Esophagus muscularis mucosa (tissue), 4 donors: ENCODE measurements at regions of chr11 and their contacts with region 1.

Region 1: GRCh38 chr11:47847892-47848635 is at the start of gene NUP160:
- DNase-seq: peak; percentile 95
- H3K4me3 ChIP-seq: peak within 1 kb of the TSS; percentile 82 to 90 (median 86)
- H3K27ac ChIP-seq: peak within 1 kb of the TSS; percentile 88 to 94 (median 90)
- H3K4me1 ChIP-seq: peaks cover 25 to 46% (median 34%) of the 10 kb centered on the region in 4 donors
- H3K27me3 ChIP-seq: no peaks in the 10 kb centered on the region
- CTCF ChIP-seq: peak in 1 of 3 experiments; percentile 6
- EP300 ChIP-seq: no peak
- POLR2A ChIP-seq: peak; percentile 38
- total RNA-seq, gene NUP160: 18.4 to 22.7 (median 19.0) TPM

Region 2: GRCh38 chr11:47642099-47642855 is 205.8 kb before region 1 on chr11 and contains the start of gene MTCH2:
- intact Hi-C with region 1: loop called (anchors 5 kb)
- DNase-seq: peak; percentile 99
- H3K4me3 ChIP-seq: peak within 1 kb of the TSS; percentile 72 to 92 (median 88)
- H3K27ac ChIP-seq: peak within 1 kb of the TSS; percentile 92 to 99 (median 95)
- H3K4me1 ChIP-seq: peaks cover 14 to 31% (median 28%) of the 10 kb centered on the region in 4 donors
- H3K27me3 ChIP-seq: no peaks in the 10 kb centered on the region
- CTCF ChIP-seq: peak; percentile 39 to 47 (median 40)
- EP300 ChIP-seq: no peak
- POLR2A ChIP-seq: peak; percentile 47
- total RNA-seq, gene MTCH2: 32.5 to 40.6 (median 37.6) TPM

Region 3: GRCh38 chr11:47724041-47724729 is 123.9 kb before region 1 on chr11:
- intact Hi-C with region 1: loop called (anchors 10 kb)
- DNase-seq: no peak
- H3K4me3 ChIP-seq: no peak overlapping the region
- H3K27ac ChIP-seq: peak overlapping the region; percentile 10 to 51 (median 46)
- H3K4me1 ChIP-seq: peaks cover 8 to 19% (median 16%) of the 10 kb centered on the region in 4 donors
- H3K27me3 ChIP-seq: no peaks in the 10 kb centered on the region
- CTCF ChIP-seq: no peak
- EP300 ChIP-seq: no peak
- POLR2A ChIP-seq: no peak

Region 4: DNA sequence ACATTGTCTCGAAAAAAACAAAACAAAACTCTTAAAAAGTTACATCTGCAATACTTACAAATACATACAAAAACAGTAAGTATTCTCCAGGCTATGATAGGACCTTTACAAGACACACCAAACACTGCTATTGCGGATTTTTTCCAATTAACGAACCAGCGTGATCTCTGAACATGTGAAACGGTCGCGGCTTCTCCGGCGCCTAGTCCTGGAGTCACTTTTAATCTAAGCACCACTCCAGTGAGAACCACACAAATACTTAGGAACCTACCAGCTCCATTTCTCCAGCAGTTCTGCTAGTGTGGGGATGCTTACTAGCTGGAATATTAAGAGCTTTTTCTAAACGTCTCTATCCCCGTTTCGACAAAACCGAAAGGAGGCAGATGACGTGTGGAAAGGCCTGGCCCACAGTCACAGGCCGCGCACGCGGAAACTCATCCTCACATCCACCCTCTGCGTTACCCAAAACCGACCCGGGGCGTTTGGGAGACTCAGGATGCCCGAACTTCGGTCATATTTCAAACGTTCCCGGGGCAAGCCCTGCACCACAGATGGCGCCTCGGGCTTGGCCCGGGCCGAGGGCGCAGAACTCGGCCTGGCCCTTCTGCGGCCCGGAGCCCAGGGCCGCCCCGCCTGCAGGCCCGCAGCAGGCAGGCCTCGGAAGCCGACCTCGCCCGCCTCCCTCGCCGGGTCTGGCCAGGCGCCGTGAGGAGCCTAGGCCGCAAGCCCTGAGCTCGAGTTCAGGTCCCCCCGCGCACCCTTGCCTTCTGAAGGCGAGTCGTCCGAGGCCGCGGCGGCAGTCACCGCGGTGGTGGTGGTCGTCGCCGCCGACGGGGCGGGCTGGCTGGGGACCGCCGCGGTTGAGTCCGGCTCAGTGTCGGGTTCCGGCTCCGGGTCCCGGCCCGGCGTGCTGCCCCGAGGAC is 81.5 kb before region 1 on chr11:
- intact Hi-C with region 1: loop called (anchors 5 kb)
- DNase-seq: peak; percentile 92
- H3K4me3 ChIP-seq: peak overlapping the region; percentile 69 to 93 (median 81)
- H3K27ac ChIP-seq: peak overlapping the region; percentile 96 to 100 (median 98)
- H3K4me1 ChIP-seq: peaks cover 8 to 41% (median 36%) of the 10 kb centered on the region in 4 donors
- H3K27me3 ChIP-seq: no peaks in the 10 kb centered on the region
- CTCF ChIP-seq: no peak
- EP300 ChIP-seq: no peak
- POLR2A ChIP-seq: no peak